IMR-90 (cell line): ENCODE measurements at regions of chr5 and their contacts with region 1.

Region 1: GRCh38 chr5:97046270-97046982 is 96.0 kb downstream of the LIX1 start:
- DNase-seq: peak; percentile 25
- ATAC-seq: peak; percentile 51
- H3K4me3 ChIP-seq: no peak overlapping the region
- H3K27ac ChIP-seq: no peak overlapping the region
- H3K4me1 ChIP-seq: no peaks in the 10 kb centered on the region; the same call in 1 of the 2 replicates
- H3K27me3 ChIP-seq: peaks cover 19% of the 10 kb centered on the region
- CTCF ChIP-seq: no peak
- POLR2A ChIP-seq: no peak
- RAD21 ChIP-seq: no peak

Region 2: GRCh38 chr5:97078958-97079743 is 32.7 kb after region 1 on chr5:
- CTCF ChIA-PET with region 1: no interaction called
- POLR2A ChIA-PET with region 1: no interaction called
- dilution Hi-C with region 1: no loop called
- in situ Hi-C with region 1: no loop called
- intact Hi-C with region 1: loop called (anchors 5 kb)
- DNase-seq: peak; percentile 51
- ATAC-seq: peak; percentile 37; the same call in 1 of the 2 replicates
- H3K4me3 ChIP-seq: no peak overlapping the region
- H3K27ac ChIP-seq: no peak overlapping the region
- H3K4me1 ChIP-seq: no peaks in the 10 kb centered on the region
- H3K27me3 ChIP-seq: peaks cover 4% of the 10 kb centered on the region
- CTCF ChIP-seq: no peak
- POLR2A ChIP-seq: no peak
- RAD21 ChIP-seq: no peak